OCI-LY7 (cell line): ENCODE measurements at regions of chr19 and their contacts with region 1.

Region 1: GRCh38 chr19:39765091-39766076 is 13.3 kb upstream of the LEUTX start:
- DNase-seq: peak; percentile 61
- H3K4me3 ChIP-seq: no peak overlapping the region
- H3K27ac ChIP-seq: no peak overlapping the region
- H3K4me1 ChIP-seq: peaks cover 1% of the 10 kb centered on the region
- CTCF ChIP-seq: peak; percentile 98

Region 2: GRCh38 chr19:39557441-39558151 is 207.8 kb before region 1 on chr19:
- CTCF ChIA-PET with region 1: no interaction called
- POLR2A ChIA-PET with region 1: no interaction called
- intact Hi-C with region 1: loop called (anchors 10 kb)
- DNase-seq: no peak
- H3K4me3 ChIP-seq: no peak overlapping the region
- H3K27ac ChIP-seq: no peak overlapping the region
- H3K4me1 ChIP-seq: peaks cover 8% of the 10 kb centered on the region
- CTCF ChIP-seq: no peak

Region 3: GRCh38 chr19:39828015-39828653 is 62.8 kb after region 1 on chr19:
- CTCF ChIA-PET with region 1: no interaction called
- POLR2A ChIA-PET with region 1: no interaction called
- intact Hi-C with region 1: no loop called
- DNase-seq: no peak
- H3K4me3 ChIP-seq: no peak overlapping the region
- H3K27ac ChIP-seq: no peak overlapping the region
- H3K4me1 ChIP-seq: peaks cover 2% of the 10 kb centered on the region
- CTCF ChIP-seq: no peak